MCF 10A (cell line): ENCODE measurements at regions of chr12 and their contacts with region 1.

Region 1: GRCh38 chr12:7108796-7109571 is at the start of gene C1RL:
- DNase-seq: peak; percentile 95
- H3K4me3 Mint-ChIP-seq: peak within 1 kb of the TSS; percentile 95
- H3K27ac Mint-ChIP-seq: peak within 1 kb of the TSS; percentile 90
- H3K4me1 Mint-ChIP-seq: peaks cover 24% of the 10 kb centered on the region
- H3K27me3 Mint-ChIP-seq: no peaks in the 10 kb centered on the region
- CTCF ChIP-seq: peak; percentile 92
- total RNA-seq, gene C1RL: 49.8 and 55.7 TPM in 2 replicates

Region 2: GRCh38 chr12:6944381-6945186 is 164.4 kb before region 1 on chr12:
- CTCF ChIA-PET with region 1: interaction called, 35 read pairs
- POLR2A ChIA-PET with region 1: interaction called, 71 read pairs
- intact Hi-C with region 1: loop called (anchors 1 kb)
- DNase-seq: peak; percentile 96
- H3K4me3 Mint-ChIP-seq: peak overlapping the region; percentile 85
- H3K27ac Mint-ChIP-seq: peak overlapping the region; percentile 98
- H3K4me1 Mint-ChIP-seq: peaks cover 32% of the 10 kb centered on the region
- H3K27me3 Mint-ChIP-seq: no peaks in the 10 kb centered on the region
- CTCF ChIP-seq: peak; percentile 63

Region 3: GRCh38 chr12:7018350-7019042 is 90.5 kb before region 1 on chr12 and contains the start of gene LPCAT3:
- CTCF ChIA-PET with region 1: interaction called, 5 read pairs
- POLR2A ChIA-PET with region 1: interaction called, 15 read pairs
- intact Hi-C with region 1: no loop called
- DNase-seq: peak; percentile 96
- H3K4me3 Mint-ChIP-seq: peak within 1 kb of the TSS; percentile 80
- H3K27ac Mint-ChIP-seq: peak within 1 kb of the TSS; percentile 29
- H3K4me1 Mint-ChIP-seq: peaks cover 32% of the 10 kb centered on the region
- H3K27me3 Mint-ChIP-seq: no peaks in the 10 kb centered on the region
- CTCF ChIP-seq: peak; percentile 77
- total RNA-seq, gene LPCAT3: 14.4 and 15.4 TPM in 2 replicates

Region 4: DNA sequence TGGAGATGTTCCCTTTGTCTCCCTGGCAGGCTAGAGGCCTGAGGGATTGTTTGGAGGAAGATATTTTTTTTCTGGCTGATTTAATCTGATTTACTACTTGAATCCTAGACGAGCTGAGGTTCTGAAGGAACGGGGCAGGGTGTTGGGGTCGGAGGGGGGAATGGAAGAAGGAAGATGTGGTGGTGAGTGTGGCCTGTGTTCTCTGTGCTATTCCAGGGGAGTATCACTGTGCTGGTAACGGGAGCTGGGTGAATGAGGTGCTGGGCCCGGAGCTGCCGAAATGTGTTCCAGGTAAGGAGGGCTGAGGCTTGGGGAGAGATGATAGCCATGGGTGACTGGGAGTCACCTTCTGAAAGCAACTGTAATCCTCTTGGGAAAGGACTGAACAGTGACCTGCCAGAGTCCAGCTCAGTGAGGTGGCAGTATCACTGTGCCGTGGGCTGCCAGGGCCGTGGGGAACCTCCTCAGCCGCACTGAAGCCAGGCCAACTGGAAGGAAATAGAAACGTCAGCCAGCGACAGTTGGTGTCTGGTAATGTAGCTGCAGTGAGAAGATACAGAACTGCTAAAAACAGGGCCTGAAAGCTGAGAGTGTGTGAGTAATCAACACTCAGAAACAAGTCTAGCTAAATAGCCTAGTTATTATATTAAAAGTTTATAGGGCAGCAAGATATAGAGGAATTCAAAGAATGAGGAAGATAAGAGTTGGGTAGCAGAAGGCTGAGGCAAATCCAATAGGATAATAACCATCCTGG is 40.6 kb before region 1 on chr12:
- CTCF ChIA-PET with region 1: interaction called, 9 read pairs
- POLR2A ChIA-PET with region 1: interaction called, 21 read pairs
- intact Hi-C with region 1: no loop called
- DNase-seq: no peak
- H3K4me3 Mint-ChIP-seq: no peak overlapping the region
- H3K27ac Mint-ChIP-seq: no peak overlapping the region
- H3K4me1 Mint-ChIP-seq: peaks cover 9% of the 10 kb centered on the region
- H3K27me3 Mint-ChIP-seq: no peaks in the 10 kb centered on the region
- CTCF ChIP-seq: no peak

Region 5: GRCh38 chr12:7092229-7092985 is 16.6 kb before region 1 on chr12 and contains the start of gene C1R:
- CTCF ChIA-PET with region 1: interaction called, 21 read pairs
- POLR2A ChIA-PET with region 1: interaction called, 50 read pairs
- intact Hi-C with region 1: loop called (anchors 1 kb)
- DNase-seq: peak; percentile 88
- H3K4me3 Mint-ChIP-seq: peak within 1 kb of the TSS; percentile 79
- H3K27ac Mint-ChIP-seq: peak within 1 kb of the TSS; percentile 93
- H3K4me1 Mint-ChIP-seq: peaks cover 26% of the 10 kb centered on the region
- H3K27me3 Mint-ChIP-seq: no peaks in the 10 kb centered on the region
- CTCF ChIP-seq: peak; percentile 75
- total RNA-seq, gene C1R: 13.1 and 16.7 TPM in 2 replicates

Region 6: DNA sequence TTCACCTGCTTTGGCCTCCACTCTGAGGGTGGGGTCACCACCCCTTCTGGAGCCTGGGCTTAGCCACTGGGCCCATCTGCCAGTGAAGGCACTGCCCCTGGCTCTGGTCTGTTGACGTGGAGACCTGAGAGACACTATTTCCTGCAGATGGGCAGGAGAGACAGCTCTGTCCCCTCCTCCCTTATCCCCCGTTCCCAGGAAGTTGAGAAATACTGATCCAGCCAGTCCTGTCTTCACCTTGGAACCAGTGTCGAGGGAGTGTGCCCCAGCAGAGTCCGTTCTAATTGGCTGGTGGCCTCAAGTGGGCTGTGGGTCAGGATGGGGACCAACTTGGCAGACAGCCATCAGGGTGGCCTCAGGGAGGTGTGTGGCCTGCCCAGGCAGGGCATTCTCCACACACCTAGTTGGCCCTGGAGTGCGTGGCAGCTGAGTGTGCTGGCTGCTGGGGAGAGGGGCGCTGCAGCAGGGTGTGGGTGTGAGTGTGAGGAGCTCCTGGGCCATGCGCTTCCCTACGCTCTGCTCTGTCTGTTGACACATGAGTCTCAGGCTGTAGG is 46.6 kb after region 1 on chr12:
- CTCF ChIA-PET with region 1: interaction called, 11 read pairs
- POLR2A ChIA-PET with region 1: no interaction called
- intact Hi-C with region 1: no loop called
- DNase-seq: peak; percentile 83
- H3K4me3 Mint-ChIP-seq: no peak overlapping the region
- H3K27ac Mint-ChIP-seq: no peak overlapping the region
- H3K4me1 Mint-ChIP-seq: peaks cover 11% of the 10 kb centered on the region
- H3K27me3 Mint-ChIP-seq: no peaks in the 10 kb centered on the region
- CTCF ChIP-seq: no peak

Region 7: DNA sequence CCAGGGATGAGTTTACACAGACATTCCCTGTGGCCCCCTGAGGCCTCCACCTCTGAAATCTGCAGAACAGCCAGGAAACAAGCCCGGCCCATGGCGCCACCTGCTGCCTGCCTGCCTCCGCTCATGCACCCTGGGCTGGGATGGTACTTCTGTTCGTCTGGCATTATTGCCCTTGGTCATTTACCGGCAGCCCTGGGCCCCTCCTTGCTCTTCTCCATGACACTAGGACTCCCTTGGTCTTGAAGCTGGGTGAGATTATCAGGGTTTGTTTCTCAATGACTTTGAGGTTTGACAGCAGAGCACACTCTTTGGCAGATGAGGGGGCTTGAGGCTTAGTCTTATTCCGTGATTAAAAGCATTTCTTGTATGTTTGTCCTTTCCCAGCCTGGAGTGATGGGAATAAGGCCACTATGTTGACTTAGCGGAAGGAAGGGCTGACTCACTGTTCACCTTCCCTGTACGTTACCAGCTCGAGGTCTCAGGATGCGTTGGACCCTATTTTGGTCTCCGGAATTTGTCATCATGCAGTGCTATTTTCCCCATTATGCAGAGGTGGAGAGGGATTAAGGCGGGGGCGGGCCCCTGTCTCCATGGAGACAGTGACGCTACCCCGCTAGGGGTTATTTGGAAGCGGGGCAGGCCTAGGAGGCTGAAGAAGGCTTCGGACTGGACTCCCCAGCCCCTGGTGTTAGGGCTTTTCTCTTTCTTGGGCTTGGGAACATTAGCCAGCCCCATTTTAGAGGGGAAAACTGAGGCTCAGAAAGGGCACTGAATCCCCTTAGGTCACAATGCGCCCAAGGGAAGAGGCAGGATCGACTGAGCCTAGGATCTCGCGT is 79.8 kb after region 1 on chr12:
- CTCF ChIA-PET with region 1: interaction called, 11 read pairs
- POLR2A ChIA-PET with region 1: interaction called, 11 read pairs
- intact Hi-C with region 1: no loop called
- DNase-seq: peak; percentile 84
- H3K4me3 Mint-ChIP-seq: peak overlapping the region; percentile 93
- H3K27ac Mint-ChIP-seq: peak overlapping the region; percentile 98
- H3K4me1 Mint-ChIP-seq: peaks cover 27% of the 10 kb centered on the region
- H3K27me3 Mint-ChIP-seq: no peaks in the 10 kb centered on the region
- CTCF ChIP-seq: peak; percentile 61